ENCODE measurements at regions of chr1 and their contacts with region 1.

Region 1: DNA sequence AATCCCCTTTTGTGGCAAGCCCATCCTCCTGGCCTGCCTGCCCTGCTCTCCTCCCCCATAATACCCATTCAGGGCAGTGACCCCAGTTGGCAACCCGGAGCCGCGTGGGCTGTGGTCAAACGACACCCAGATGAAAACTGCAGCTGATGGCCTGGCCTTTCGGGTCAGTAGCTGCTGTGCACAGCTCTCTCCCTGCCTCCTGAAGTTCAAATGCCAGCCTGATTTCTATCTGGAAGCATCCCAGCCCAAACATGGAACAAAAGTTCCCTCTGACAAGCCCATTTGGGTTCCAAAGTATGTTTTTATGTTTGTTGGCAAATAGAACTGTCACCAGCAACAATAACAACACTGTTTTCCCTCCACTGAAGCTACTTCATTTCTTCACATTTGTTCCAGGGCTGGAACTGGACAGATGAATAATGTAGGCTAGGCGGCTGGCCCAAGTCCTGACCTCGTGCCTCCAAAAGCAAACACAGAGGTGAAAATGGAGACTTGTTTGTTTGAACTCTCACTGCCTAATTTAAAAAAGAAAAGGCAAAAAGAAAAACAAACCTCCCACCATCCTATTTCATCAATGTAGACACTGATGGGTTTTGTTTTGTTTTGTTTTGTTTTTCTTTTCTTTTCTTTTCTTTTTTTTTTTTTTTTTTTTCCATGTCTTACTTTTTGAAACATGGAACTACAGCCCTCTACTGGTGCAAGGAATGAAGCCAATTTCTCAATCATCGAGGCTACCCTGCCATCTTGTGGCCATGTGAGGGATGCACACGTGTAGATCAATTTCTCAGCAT is 179.0 kb downstream of the ADSS2 start:
- DNase-seq: peak in 4 of 5 donors; percentile 40 to 68 (median 56)
- ATAC-seq: peak; percentile 52 to 89 (median 85)
- H3K4me3 ChIP-seq: no peak overlapping the region
- H3K27ac ChIP-seq: peak overlapping the region in 3 of 12 donors; percentile 7 to 32 (median 16)
- H3K4me1 ChIP-seq: peaks cover 0 to 16% (median 0%) of the 10 kb centered on the region in 12 donors
- H3K27me3 ChIP-seq: no peaks in the 10 kb centered on the region
- CTCF ChIP-seq: peak; percentile 87 to 99 (median 93)
- POLR2A ChIP-seq: no peak

Region 2: GRCh38 chr1:243482141-243483022 is 790.3 kb before region 1 on chr1:
- intact Hi-C with region 1: loop called in 1 of 10 experiments (anchors 10 kb)
- DNase-seq: peak in 1 of 5 donors; percentile 54
- ATAC-seq: peak in 3 of 4 donors; percentile 51 to 74 (median 61)
- H3K4me3 ChIP-seq: peak overlapping the region in 11 of 12 donors; percentile 18 to 56 (median 49)
- H3K27ac ChIP-seq: no peak overlapping the region
- H3K4me1 ChIP-seq: peaks cover 0 to 22% (median 13%) of the 10 kb centered on the region in 12 donors
- H3K27me3 ChIP-seq: no peaks in the 10 kb centered on the region
- CTCF ChIP-seq: no peak
- POLR2A ChIP-seq: no peak

Region 3: GRCh38 chr1:243708210-243708609 is 564.5 kb before region 1 on chr1:
- intact Hi-C with region 1: loop called in 7 of 10 experiments (anchors 2 to 10 kb)
- DNase-seq: no peak
- ATAC-seq: no peak
- H3K4me3 ChIP-seq: no peak overlapping the region
- H3K27ac ChIP-seq: no peak overlapping the region
- H3K4me1 ChIP-seq: peaks cover 0 to 22% (median 0%) of the 10 kb centered on the region in 12 donors
- H3K27me3 ChIP-seq: no peaks in the 10 kb centered on the region
- CTCF ChIP-seq: peak in 7 of 12 donors; percentile 12 to 43 (median 38)
- POLR2A ChIP-seq: no peak

Region 4: DNA sequence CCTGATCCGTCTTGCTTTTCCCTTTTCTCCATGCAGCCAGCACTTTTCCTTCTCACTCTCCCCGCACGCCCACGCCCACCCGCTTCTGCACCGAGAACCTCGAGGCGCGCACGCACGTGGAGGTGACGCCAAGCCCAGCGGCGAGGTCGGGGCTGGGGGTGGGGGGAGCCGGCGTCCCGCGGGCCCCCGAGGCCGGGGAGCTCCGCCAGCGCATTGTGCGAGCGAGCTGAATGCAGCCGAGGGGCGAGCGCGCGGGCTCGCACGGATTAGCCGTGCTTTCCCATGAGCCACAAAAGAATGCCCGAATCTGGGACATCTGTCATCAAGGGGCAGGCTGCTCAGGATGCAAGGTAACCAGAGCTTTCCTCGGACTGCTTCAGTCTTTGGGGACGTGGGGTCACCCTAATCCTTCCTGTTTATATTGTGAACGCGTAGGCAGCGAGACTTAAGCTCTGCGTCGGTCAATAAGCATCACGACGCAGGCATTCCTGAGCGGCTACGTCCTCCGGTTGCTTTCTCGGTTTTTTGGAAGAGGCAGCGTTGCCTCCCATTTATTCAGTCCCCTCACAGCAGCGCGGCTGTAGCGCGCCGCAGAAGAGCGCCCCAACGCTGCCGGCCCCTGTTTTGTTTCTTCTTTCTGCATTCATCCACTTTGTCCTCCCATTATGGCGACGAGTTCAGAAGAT is 355.3 kb before region 1 on chr1:
- intact Hi-C with region 1: loop called in 1 of 10 experiments (anchors 5 kb)
- DNase-seq: peak in 4 of 5 donors; percentile 27 to 42 (median 33)
- ATAC-seq: peak; percentile 67 to 88 (median 80)
- H3K4me3 ChIP-seq: peak overlapping the region; percentile 24 to 62 (median 52)
- H3K27ac ChIP-seq: peak overlapping the region in 5 of 12 donors; percentile 16 to 51 (median 22)
- H3K4me1 ChIP-seq: peaks cover 0 to 16% (median 9%) of the 10 kb centered on the region in 12 donors
- H3K27me3 ChIP-seq: peaks cover 0 to 41% (median 16%) of the 10 kb centered on the region in 9 donors
- CTCF ChIP-seq: peak in 3 of 12 donors; percentile 19 to 23 (median 21)
- POLR2A ChIP-seq: no peak

Region 5: DNA sequence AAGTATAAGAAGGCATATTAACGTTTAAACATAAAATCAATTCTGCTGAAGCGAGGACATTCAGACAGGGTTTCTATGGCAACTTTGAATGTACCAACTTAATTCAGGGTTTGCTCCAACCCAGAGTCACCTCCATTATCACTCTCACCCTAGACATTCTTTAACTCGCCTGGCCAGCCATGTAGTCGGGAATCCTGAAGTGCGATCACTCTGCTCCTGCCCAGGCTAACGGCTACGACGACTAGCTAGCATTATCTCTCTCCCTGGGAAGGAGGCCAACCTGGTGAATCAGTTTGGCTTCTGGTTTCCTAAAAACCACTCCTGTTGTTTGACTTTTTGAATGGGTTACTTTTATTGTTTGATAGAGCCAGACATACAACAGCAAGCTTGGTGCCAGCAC is 260.5 kb before region 1 on chr1:
- intact Hi-C with region 1: loop called in 1 of 10 experiments (anchors 5 kb)
- DNase-seq: peak in 1 of 5 donors; percentile 44
- ATAC-seq: peak in 3 of 4 donors; percentile 34 to 65 (median 64)
- H3K4me3 ChIP-seq: peak overlapping the region in 4 of 12 donors; percentile 7 to 34 (median 17)
- H3K27ac ChIP-seq: no peak overlapping the region
- H3K4me1 ChIP-seq: peaks cover 0 to 19% (median 1%) of the 10 kb centered on the region in 12 donors
- H3K27me3 ChIP-seq: no peaks in the 10 kb centered on the region
- CTCF ChIP-seq: no peak
- POLR2A ChIP-seq: no peak

Region 6: DNA sequence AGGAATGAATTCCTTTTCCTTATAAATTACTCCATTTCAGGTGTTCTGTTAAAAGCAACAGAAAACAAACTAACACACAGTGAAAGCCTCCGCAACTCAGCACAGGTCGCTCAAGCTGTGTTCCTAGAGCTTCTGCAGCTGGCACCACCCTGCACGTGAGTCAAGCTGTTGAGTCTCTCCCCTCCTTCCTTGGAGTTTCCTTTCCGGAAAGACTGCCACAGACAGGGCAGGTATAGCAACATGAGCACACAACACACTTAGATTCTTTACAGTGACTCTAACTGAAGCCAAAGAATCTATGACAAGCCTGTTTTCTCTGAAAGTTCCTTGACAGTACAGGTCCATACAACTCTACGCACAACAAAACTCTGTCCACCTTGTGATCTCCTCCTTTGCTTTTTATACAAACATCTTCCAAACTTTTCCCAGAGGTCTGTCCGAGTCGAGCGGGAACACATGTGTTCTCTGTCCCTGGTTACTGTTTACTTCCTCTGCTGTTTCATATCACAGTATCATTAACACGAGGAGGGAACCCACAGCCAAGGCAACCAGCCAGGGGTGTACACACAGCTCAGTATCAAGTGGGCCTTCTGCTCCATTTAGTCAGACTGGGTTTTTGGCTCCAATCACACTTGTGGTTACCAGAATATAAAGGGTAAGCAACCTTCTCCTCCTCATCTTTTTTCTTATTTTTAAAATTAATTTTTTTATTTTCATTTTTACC is 341.6 kb after region 1 on chr1:
- intact Hi-C with region 1: no loop called
- DNase-seq: no peak
- ATAC-seq: no peak
- H3K4me3 ChIP-seq: no peak overlapping the region
- H3K27ac ChIP-seq: no peak overlapping the region
- H3K4me1 ChIP-seq: no peaks in the 10 kb centered on the region
- H3K27me3 ChIP-seq: no peaks in the 10 kb centered on the region
- CTCF ChIP-seq: no peak
- POLR2A ChIP-seq: no peak

Region 7: DNA sequence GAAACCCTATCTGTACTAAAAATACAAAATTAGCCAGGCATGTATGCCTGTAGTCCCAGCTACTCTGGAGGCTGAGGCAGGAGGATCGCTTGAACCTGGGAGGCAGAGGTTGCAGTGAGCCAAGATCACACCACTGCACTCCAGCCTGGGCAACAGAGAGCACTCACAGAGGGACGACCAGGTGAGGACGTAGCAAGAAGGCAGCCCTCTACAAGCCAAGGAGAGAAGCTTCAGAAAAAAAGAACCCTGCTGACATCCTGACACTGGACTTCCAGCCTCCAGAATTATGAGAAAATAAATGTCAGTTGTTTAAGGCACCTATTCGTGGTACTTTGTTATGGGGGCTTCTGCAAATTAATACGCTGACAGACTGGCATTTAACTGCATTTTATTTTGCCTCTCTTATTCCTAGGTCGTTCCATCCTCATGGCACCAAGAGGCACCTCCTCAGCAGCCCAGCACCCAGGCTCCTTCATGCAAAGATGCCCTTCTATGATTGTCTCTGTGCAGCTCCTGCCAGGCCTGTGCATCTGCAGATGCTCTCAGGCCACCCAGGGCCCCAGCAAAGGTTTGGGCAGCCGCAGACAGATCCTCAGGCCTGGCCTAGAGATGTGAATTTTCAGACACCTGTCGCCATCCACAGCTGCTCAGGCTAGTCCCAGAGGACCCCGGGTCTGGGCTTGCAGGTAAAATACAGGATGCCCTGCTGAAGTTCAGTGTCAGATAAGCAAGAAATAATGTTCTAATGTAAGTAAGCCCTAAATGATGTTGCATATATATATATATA is 476.8 kb after region 1 on chr1:
- intact Hi-C with region 1: no loop called
- DNase-seq: no peak
- ATAC-seq: no peak
- H3K4me3 ChIP-seq: no peak overlapping the region
- H3K27ac ChIP-seq: no peak overlapping the region
- H3K4me1 ChIP-seq: no peaks in the 10 kb centered on the region
- H3K27me3 ChIP-seq: no peaks in the 10 kb centered on the region
- CTCF ChIP-seq: no peak
- POLR2A ChIP-seq: no peak

Measured in heart left ventricle (tissue), 16 donors.